Lower leg skin (tissue), 4 donors: ENCODE measurements at regions of chr7 and their contacts with region 1.

Region 1: DNA sequence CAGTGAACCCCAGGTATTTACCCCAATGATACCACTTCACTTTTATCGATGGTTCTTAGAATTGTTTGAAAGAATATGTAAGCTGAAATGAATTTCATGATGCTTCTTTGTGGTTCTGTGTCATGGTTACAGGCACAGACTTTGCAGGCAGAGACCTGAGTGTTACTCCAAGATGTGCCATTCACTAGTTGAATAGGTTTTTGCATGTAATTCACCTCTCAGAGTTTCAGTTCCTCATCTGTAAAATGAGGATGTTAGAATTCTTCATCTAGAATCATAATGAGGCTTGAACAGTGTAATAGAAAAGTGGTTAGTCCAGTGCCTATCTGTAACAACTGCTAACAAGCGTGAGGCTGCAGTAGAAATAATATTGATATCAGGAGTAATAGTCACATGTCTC is 54.6 kb downstream of the VSTM2A start:
- DNase-seq: no peak
- H3K4me3 ChIP-seq: no peak overlapping the region
- CTCF ChIP-seq: no peak
- POLR2A ChIP-seq: no peak

Region 2: DNA sequence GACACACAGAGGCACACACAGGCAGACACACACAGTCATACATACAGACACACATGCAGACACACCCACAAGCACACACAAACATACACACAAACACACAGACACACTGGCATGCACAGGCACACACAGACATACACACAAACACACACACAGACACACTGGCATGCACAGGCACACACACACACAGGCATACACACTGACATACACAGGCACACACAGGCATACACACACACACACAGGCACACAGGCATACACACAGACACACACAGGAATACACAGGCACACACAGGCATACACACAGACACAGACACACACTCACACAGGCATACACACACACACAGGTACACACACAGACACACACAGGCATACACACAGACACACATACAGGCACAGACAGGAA is 395.2 kb before region 1 on chr7:
- intact Hi-C with region 1: loop called (anchors 5 kb)
- DNase-seq: no peak
- H3K4me3 ChIP-seq: no peak overlapping the region
- CTCF ChIP-seq: no peak
- POLR2A ChIP-seq: no peak